GM12878 (cell line): ENCODE measurements at regions of chr16 and their contacts with region 1.

Region 1: GRCh38 chr16:88856828-88857733 is at the starts of genes GALNS and TRAPPC2L:
- DNase-seq: peak; percentile 69
- ATAC-seq: peak; percentile 90
- H3K4me3 ChIP-seq: peak within 1 kb of the TSS; percentile 88
- H3K27ac ChIP-seq: peak within 1 kb of the TSS; percentile 64
- H3K4me1 ChIP-seq: peaks cover 23% of the 10 kb centered on the region
- H3K27me3 ChIP-seq: no peaks in the 10 kb centered on the region
- CTCF ChIP-seq: no peak
- EP300 ChIP-seq: no peak
- POLR2A ChIP-seq: peak; percentile 96
- RAD21 ChIP-seq: no peak
- polyA plus RNA-seq, gene GALNS: 0.37 to 0.95 TPM
- polyA plus RNA-seq, gene TRAPPC2L: 337 to 363 TPM

Region 2: GRCh38 chr16:88811769-88812512 is 45.1 kb before region 1 on chr16 and contains the start of gene APRT:
- CTCF ChIA-PET with region 1: interaction called, 19 read pairs
- POLR2A ChIA-PET with region 1: interaction called, 8 read pairs
- RAD21 ChIA-PET with region 1: interaction called, 14 read pairs
- SMC1A ChIA-PET with region 1: interaction called, 4 read pairs
- in situ Hi-C with region 1: no loop called
- intact Hi-C with region 1: loop called (anchors 5 kb)
- DNase-seq: peak; percentile 83
- ATAC-seq: peak; percentile 83
- H3K4me3 ChIP-seq: peak within 1 kb of the TSS; percentile 85
- H3K27ac ChIP-seq: peak within 1 kb of the TSS; percentile 95
- H3K4me1 ChIP-seq: peaks cover 20% of the 10 kb centered on the region
- H3K27me3 ChIP-seq: no peaks in the 10 kb centered on the region
- CTCF ChIP-seq: peak in 2 of 3 experiments; percentile 39 to 56; a peak in 3 of 6 replicates
- EP300 ChIP-seq: no peak
- POLR2A ChIP-seq: peak; percentile 91
- RAD21 ChIP-seq: 0 out of 2 replicates have a peak, but pooled peaks have one; percentile 30
- polyA plus RNA-seq, gene APRT: 30.6 to 100 TPM

Region 3: GRCh38 chr16:88881007-88881615 is 24.0 kb after region 1 on chr16:
- CTCF ChIA-PET with region 1: no interaction called
- POLR2A ChIA-PET with region 1: no interaction called
- RAD21 ChIA-PET with region 1: no interaction called
- SMC1A ChIA-PET with region 1: no interaction called
- in situ Hi-C with region 1: no loop called
- intact Hi-C with region 1: no loop called
- DNase-seq: no peak
- ATAC-seq: no peak
- H3K4me3 ChIP-seq: no peak overlapping the region
- H3K27ac ChIP-seq: no peak overlapping the region
- H3K4me1 ChIP-seq: no peaks in the 10 kb centered on the region
- H3K27me3 ChIP-seq: no peaks in the 10 kb centered on the region
- CTCF ChIP-seq: no peak
- EP300 ChIP-seq: no peak
- POLR2A ChIP-seq: no peak
- RAD21 ChIP-seq: no peak

Region 4: DNA sequence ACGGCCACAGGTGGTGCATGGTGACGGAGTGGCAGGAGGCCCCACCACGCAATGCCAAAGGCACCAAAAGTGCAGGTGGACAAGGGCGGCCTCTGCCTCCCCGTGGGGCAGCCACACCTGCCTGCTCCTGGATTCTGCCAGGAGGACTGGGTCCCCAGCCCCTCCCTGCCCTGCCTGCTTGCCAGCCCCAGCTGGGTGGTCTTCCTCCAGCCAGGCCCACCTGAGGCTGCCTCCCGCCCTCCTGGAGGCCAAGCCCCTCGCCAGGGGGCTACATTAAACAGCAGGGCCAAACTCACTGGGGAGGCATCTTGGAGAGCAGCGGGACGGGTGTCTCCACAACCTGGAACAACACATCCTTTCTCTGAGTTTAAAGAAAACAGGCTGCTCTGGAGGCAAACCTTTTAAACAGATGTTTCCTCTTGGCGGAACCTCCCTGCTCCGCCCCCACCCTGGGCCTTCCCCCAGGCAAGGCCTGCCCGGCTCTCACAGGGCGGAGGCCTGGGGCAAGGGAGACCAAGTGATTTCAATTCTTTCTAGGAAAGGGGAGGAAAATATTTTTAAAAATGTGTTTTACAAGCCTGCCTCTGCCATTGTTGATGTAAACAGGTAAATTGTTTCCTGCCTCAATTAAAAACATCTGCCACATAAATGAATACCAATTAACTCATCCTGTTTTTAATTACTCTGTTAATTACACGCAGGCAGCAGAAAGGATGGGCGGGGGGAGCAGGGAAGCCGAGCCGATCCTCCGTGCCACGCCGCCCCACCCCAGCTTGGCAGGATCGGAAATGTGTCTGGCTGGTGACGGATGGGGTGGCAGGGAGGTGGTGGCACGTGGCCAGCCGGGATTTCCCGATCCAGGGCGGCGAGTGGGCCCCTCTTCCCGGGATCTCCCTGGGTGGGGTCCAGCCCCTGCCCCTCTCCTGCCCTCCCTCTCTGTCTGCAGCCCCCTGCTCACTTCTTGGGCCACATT is 63.8 kb after region 1 on chr16:
- CTCF ChIA-PET with region 1: interaction called, 3 read pairs
- POLR2A ChIA-PET with region 1: no interaction called
- RAD21 ChIA-PET with region 1: no interaction called
- SMC1A ChIA-PET with region 1: no interaction called
- in situ Hi-C with region 1: no loop called
- intact Hi-C with region 1: loop called (anchors 5 kb)
- DNase-seq: no peak
- ATAC-seq: peak; percentile 61
- H3K4me3 ChIP-seq: no peak overlapping the region
- H3K27ac ChIP-seq: peak overlapping the region; percentile 16
- H3K4me1 ChIP-seq: peaks cover 20% of the 10 kb centered on the region
- H3K27me3 ChIP-seq: no peaks in the 10 kb centered on the region
- CTCF ChIP-seq: no peak
- EP300 ChIP-seq: no peak
- POLR2A ChIP-seq: 0 out of 2 replicates have a peak, but pooled peaks have one; percentile 1
- RAD21 ChIP-seq: no peak